Activated CD8-positive, alpha-beta T cell treated with anti-CD3 and anti-CD28 coated beads for 36 hours (primary cell): ENCODE measurements at regions of chr14 and their contacts with region 1.

Region 1: GRCh38 chr14:20970983-20971704 is 15.9 kb downstream of the RNASE2 start:
- DNase-seq: peak; percentile 86
- ATAC-seq: peak; percentile 94
- H3K4me3 Mint-ChIP-seq: peak overlapping the region; percentile 79
- H3K27ac Mint-ChIP-seq: peak overlapping the region; percentile 48
- H3K4me1 Mint-ChIP-seq: peaks cover 6% of the 10 kb centered on the region
- H3K27me3 Mint-ChIP-seq: peaks cover 28% of the 10 kb centered on the region
- CTCF ChIP-seq: peak; percentile 95

Region 2: DNA sequence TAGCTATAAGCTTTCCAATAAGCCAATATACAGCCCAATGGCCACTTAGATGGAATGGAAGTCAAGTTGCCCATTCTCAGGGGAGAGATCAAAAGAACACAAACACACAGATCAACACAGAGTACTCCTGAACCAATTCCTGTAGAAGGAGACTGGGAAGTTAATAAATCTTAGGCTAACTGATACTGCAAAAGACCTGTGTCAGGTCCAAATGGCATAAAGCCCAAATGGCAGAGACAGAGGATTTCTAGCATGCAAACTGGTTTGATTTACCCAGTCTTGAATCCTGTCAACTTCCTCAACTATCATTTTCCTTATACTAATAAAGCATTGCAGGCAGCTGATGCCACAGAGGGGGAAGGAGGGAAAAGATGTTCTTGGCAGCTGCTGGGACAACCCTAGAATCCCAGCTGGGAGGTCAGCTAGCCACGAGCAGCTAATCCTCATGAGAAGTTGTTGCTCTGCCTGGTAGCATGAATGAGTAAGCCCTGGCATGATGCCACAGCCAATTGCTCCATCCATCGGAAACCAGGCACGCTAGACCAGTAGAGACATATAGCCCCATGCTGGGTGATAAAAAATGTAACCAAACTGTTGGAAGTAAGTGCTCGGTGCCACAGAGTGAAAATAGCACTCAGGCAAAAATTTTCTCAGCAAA is 256.4 kb before region 1 on chr14:
- CTCF ChIA-PET with region 1: interaction called, 14 read pairs
- POLR2A ChIA-PET with region 1: no interaction called
- intact Hi-C with region 1: no loop called
- DNase-seq: no peak
- ATAC-seq: no peak
- H3K4me3 Mint-ChIP-seq: no peak overlapping the region
- H3K27ac Mint-ChIP-seq: no peak overlapping the region
- H3K4me1 Mint-ChIP-seq: no peaks in the 10 kb centered on the region
- H3K27me3 Mint-ChIP-seq: peaks cover 7% of the 10 kb centered on the region
- CTCF ChIP-seq: no peak

Region 3: DNA sequence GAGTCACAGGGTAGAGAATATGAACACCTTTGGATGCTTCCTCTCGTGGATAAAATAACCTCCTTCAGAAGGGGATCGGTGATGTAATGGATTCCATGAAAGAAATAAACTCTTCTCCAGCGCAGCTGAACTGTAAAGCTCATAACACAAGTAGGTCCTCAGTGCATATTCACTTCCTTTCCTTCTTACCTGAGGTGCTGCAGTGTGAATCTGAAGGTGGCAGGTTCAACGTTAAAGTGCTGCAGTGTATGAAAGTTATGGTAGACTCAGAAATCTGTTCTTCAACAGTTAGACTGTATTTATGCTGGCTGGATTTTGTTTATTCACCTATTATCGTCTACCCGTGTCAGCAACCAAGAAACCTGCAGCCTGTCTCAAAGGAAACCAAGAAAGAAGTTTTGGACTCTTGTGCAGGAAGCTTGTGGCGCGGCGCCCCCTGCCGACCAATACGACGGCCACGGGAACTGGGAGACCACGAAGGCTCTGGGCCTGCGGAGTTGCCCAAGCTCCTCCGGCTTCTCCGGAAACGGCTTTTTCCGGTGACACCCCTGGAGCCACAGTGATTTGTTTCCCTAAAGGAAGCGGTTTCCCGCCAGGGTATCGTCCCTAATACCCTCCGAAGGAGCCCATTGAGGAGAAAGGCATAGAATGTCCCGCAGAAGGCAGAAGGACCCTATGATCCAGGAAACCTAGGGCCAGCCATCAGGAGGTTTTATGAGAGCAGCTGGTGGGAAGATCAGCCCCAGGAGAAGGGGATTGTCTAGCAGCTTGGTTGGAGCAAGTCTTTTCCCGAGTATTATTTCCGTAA is 97.6 kb before region 1 on chr14:
- CTCF ChIA-PET with region 1: interaction called, 31 read pairs
- POLR2A ChIA-PET with region 1: no interaction called
- intact Hi-C with region 1: loop called (anchors 5 kb)
- DNase-seq: peak; percentile 93
- ATAC-seq: peak; percentile 98
- H3K4me3 Mint-ChIP-seq: peak overlapping the region; percentile 41
- H3K27ac Mint-ChIP-seq: no peak overlapping the region
- H3K4me1 Mint-ChIP-seq: peaks cover 9% of the 10 kb centered on the region
- H3K27me3 Mint-ChIP-seq: peaks cover 4% of the 10 kb centered on the region
- CTCF ChIP-seq: peak; percentile 73

Region 4: DNA sequence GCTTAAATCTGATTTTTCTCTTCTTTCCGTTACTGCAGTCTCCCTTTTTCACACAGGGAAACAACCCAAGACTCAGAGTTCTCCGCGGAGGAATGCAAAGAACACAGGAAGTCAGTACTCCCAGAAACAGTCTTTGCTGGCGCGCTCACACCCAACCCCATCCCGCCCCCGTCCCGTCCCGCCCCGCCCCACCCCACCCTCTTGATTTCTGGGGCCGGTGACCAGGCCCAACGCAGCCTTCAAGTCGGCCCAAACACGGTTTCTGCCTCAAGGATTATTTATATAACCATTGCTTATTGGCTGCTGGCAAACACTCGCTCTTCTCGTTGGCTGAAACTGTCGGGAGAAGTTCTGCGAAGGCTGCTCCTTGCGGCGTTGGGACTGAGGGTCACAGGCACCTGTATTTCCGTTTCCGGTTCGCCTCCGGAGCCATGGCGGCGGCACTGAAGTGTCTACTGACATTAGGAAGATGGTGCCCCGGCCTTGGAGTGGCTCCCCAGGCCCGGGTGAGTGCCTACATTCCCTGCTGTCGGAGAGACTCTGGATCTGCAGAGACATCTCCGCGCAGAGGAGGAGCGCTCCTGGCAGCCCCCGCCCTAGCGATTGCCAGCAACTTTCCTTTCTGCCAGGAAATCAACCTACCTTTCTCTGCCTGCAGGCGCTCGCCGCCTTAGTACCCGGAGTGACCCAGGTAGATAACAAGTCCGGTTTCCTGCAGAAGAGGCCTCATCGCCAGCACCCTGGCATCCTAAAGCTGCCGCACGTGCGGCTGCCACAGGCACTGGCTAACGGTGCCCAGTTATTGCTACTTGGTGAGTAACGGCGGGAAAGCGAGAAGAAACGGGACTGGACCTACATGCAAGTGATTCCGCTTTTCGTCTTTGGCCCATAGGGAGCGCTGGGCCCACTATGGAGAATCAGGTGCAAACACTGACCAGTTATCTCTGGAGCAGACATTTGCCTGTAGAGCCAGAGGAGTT is 18.7 kb after region 1 on chr14 and contains the start of gene METTL17:
- CTCF ChIA-PET with region 1: interaction called, 48 read pairs
- POLR2A ChIA-PET with region 1: interaction called, 4 read pairs
- intact Hi-C with region 1: no loop called
- DNase-seq: peak; percentile 94
- ATAC-seq: peak; percentile 97
- H3K4me3 Mint-ChIP-seq: peak within 1 kb of the TSS; percentile 84
- H3K27ac Mint-ChIP-seq: peak within 1 kb of the TSS; percentile 88
- H3K4me1 Mint-ChIP-seq: peaks cover 26% of the 10 kb centered on the region
- H3K27me3 Mint-ChIP-seq: no peaks in the 10 kb centered on the region
- CTCF ChIP-seq: peak; percentile 51
- total RNA-seq, gene METTL17: 88.4 to 92.0 TPM

Region 5: GRCh38 chr14:21014761-21015190 is 43.6 kb after region 1 on chr14:
- CTCF ChIA-PET with region 1: interaction called, 13 read pairs
- POLR2A ChIA-PET with region 1: no interaction called
- intact Hi-C with region 1: no loop called
- DNase-seq: peak; percentile 86
- ATAC-seq: peak; percentile 73
- H3K4me3 Mint-ChIP-seq: no peak overlapping the region
- H3K27ac Mint-ChIP-seq: no peak overlapping the region
- H3K4me1 Mint-ChIP-seq: no peaks in the 10 kb centered on the region
- H3K27me3 Mint-ChIP-seq: peaks cover 12% of the 10 kb centered on the region
- CTCF ChIP-seq: peak; percentile 89

Region 6: DNA sequence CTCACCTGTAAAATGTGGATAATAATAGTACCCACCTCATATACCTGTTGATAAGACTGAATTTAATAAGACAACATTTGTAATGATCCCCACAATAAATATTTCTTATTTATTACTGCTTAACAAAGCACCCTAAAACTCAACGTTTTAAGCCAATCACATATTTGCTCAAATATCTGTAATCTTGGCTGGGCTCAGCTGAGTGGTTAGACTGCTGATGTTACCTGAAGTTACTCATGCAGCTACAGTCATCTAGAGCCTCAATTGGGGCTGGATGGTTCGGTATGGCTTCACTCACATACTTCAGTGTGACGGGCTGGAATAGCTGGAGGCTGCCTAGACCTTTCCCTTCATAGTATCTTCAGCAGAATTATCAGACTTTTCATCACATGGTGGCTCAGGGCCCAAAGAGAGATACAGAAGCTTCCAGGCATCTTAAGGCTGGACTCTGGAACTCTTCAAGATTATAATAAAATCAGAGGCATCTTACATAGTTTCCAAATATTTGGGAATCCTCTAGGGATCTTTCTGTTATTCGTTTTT is 189.0 kb after region 1 on chr14:
- CTCF ChIA-PET with region 1: no interaction called
- POLR2A ChIA-PET with region 1: no interaction called
- intact Hi-C with region 1: no loop called
- DNase-seq: no peak
- ATAC-seq: no peak
- H3K4me3 Mint-ChIP-seq: no peak overlapping the region
- H3K27ac Mint-ChIP-seq: no peak overlapping the region
- H3K4me1 Mint-ChIP-seq: no peaks in the 10 kb centered on the region
- H3K27me3 Mint-ChIP-seq: peaks cover 8% of the 10 kb centered on the region
- CTCF ChIP-seq: no peak

Region 7: GRCh38 chr14:21467616-21468015 is 496.5 kb after region 1 on chr14:
- CTCF ChIA-PET with region 1: no interaction called
- POLR2A ChIA-PET with region 1: no interaction called
- intact Hi-C with region 1: no loop called
- DNase-seq: no peak
- ATAC-seq: no peak
- H3K4me3 Mint-ChIP-seq: no peak overlapping the region
- H3K27ac Mint-ChIP-seq: no peak overlapping the region
- H3K4me1 Mint-ChIP-seq: peaks cover 2% of the 10 kb centered on the region
- H3K27me3 Mint-ChIP-seq: no peaks in the 10 kb centered on the region
- CTCF ChIP-seq: no peak